Activated B cell treated with CpG ODN at 0.5 μM for 24 hours (primary cell): ENCODE measurements at regions of chr10 and their contacts with region 1.

Region 1: GRCh38 chr10:6050801-6051445 is 11.2 kb downstream of the IL2RA start:
- DNase-seq: peak; percentile 79
- ATAC-seq: peak; percentile 66
- H3K4me3 Mint-ChIP-seq: peak overlapping the region; percentile 81
- H3K27ac Mint-ChIP-seq: peak overlapping the region; percentile 97
- H3K4me1 Mint-ChIP-seq: peaks cover 91% of the 10 kb centered on the region
- H3K27me3 Mint-ChIP-seq: no peaks in the 10 kb centered on the region
- CTCF ChIP-seq: no peak

Region 2: DNA sequence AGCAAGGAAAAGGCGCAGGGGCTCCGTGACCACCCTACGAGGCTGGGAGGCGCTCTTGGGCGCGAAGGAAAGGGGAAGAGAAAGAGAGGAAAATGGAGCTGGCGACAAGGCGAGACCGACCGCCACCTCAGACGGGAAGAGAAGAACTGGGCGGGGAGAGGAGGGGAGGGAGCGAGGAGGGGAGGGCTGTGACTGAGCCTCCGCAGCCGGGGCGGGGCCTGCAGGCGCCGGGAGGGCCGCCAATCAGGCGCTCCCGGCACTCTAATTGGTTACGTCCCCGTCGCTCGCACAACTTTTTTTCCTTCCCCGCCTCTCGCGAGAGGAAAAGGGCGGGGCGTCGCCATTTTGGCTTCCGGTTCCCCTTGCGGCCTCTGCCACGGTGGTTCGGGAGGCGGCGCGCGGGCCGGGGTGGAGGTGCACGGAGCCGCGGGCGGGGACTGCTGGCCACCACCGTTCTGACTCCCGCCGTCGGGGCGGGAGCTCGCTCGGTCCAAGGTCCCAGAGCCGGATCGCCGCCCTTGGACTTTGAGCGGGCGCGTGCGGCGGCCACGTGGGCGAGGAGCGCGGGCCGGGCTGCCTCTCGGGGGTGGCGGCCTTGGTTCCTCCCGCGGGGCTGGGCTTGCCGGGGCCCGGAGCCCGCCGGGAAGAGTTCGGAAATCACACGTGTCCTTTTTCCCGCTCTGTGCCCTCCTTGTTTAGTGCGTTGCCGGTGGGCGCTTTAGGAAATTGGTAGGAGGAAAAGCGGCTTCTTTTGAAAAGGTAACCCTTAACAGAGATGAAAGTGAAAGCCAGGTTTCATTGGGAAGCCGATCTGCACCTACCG is 237.4 kb before region 1 on chr10 and contains the start of gene GDI2:
- CTCF ChIA-PET with region 1: no interaction called
- POLR2A ChIA-PET with region 1: interaction called, 12 read pairs
- intact Hi-C with region 1: loop called (anchors 2 kb)
- DNase-seq: peak; percentile 96
- ATAC-seq: peak; percentile 82
- H3K4me3 Mint-ChIP-seq: peak within 1 kb of the TSS; percentile 91
- H3K27ac Mint-ChIP-seq: peak within 1 kb of the TSS; percentile 94
- H3K4me1 Mint-ChIP-seq: peaks cover 79% of the 10 kb centered on the region
- H3K27me3 Mint-ChIP-seq: no peaks in the 10 kb centered on the region
- CTCF ChIP-seq: no peak
- total RNA-seq, gene GDI2: 289 and 301 TPM in 2 replicates

Region 3: DNA sequence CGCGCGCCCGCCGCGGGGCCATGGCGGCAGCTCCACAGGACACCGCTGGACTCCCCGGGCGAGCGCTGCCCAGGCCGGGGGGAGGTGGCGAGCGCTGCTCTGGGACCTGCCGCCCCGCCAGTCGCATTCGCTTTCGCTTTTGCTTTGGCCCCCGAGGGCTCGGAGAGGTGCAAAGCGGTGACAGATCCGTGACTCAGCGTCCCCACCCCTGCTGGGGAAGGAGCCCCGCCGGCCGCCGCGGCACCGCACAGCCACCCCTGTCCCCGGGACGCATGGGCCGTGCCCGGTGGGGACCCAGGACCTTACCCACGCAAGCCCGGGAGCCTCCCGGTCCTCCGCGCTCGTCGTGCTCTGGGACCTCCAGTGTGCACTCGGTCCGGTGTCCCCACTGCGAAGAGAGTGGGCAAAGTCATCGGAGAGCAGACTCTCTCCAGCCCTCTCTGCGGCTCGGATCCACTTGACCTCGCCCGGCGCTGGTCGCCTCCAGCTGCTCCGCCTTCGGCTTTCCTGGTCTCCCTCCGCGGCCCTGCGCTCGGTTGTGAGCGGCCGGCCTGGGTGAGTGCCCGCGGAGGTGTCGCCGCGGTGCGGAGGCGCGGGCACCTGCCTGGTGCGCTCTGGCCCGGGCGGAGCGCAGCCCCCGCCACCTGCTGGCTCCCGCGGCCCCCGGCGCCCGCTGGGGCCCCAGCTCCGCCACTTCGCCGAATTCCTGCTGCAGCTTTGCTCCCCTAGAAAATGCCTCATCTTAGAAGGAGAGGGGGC is 73.3 kb before region 1 on chr10 and contains the start of gene IL15RA:
- CTCF ChIA-PET with region 1: no interaction called
- POLR2A ChIA-PET with region 1: interaction called, 30 read pairs
- intact Hi-C with region 1: loop called (anchors 1 kb)
- DNase-seq: peak; percentile 75
- ATAC-seq: peak; percentile 70
- H3K4me3 Mint-ChIP-seq: peak within 1 kb of the TSS; percentile 96
- H3K27ac Mint-ChIP-seq: peak within 1 kb of the TSS; percentile 91
- H3K4me1 Mint-ChIP-seq: peaks cover 41% of the 10 kb centered on the region
- H3K27me3 Mint-ChIP-seq: no peaks in the 10 kb centered on the region
- CTCF ChIP-seq: no peak
- total RNA-seq, gene IL15RA: 19.1 and 19.8 TPM in 2 replicates

Region 4: GRCh38 chr10:6062101-6062771 is 11.3 kb after region 1 on chr10 and contains the start of gene IL2RA:
- CTCF ChIA-PET with region 1: interaction called, 7 read pairs
- POLR2A ChIA-PET with region 1: interaction called, 339 read pairs
- intact Hi-C with region 1: loop called (anchors 1 kb)
- DNase-seq: peak; percentile 52
- ATAC-seq: peak; percentile 70
- H3K4me3 Mint-ChIP-seq: peak within 1 kb of the TSS; percentile 97
- H3K27ac Mint-ChIP-seq: peak within 1 kb of the TSS; percentile 93
- H3K4me1 Mint-ChIP-seq: peaks cover 75% of the 10 kb centered on the region
- H3K27me3 Mint-ChIP-seq: no peaks in the 10 kb centered on the region
- CTCF ChIP-seq: no peak
- total RNA-seq, gene IL2RA: 151 and 160 TPM in 2 replicates

Region 5: GRCh38 chr10:6083523-6084475 is 32.9 kb after region 1 on chr10:
- CTCF ChIA-PET with region 1: interaction called, 69 read pairs
- POLR2A ChIA-PET with region 1: interaction called, 146 read pairs
- intact Hi-C with region 1: loop called (anchors 1 kb)
- DNase-seq: no peak
- ATAC-seq: no peak
- H3K4me3 Mint-ChIP-seq: no peak overlapping the region
- H3K27ac Mint-ChIP-seq: no peak overlapping the region
- H3K4me1 Mint-ChIP-seq: peaks cover 39% of the 10 kb centered on the region
- H3K27me3 Mint-ChIP-seq: no peaks in the 10 kb centered on the region
- CTCF ChIP-seq: no peak

Region 6: GRCh38 chr10:6202684-6203330 is 151.9 kb after region 1 on chr10 and contains the start of gene PFKFB3:
- CTCF ChIA-PET with region 1: interaction called, 3 read pairs
- POLR2A ChIA-PET with region 1: interaction called, 11 read pairs
- intact Hi-C with region 1: loop called (anchors 2 kb)
- DNase-seq: peak; percentile 96
- ATAC-seq: peak; percentile 72
- H3K4me3 Mint-ChIP-seq: peak within 1 kb of the TSS; percentile 97
- H3K27ac Mint-ChIP-seq: peak within 1 kb of the TSS; percentile 82
- H3K4me1 Mint-ChIP-seq: peaks cover 33% of the 10 kb centered on the region
- H3K27me3 Mint-ChIP-seq: no peaks in the 10 kb centered on the region
- CTCF ChIP-seq: no peak
- total RNA-seq, gene PFKFB3: 96.7 and 105 TPM in 2 replicates